WTC11 (cell line): ENCODE measurements at regions of chr18 and their contacts with region 1.

Region 1: GRCh38 chr18:24631243-24632025 is 171.0 kb downstream of the HRH4 start:
- DNase-seq: peak; percentile 31
- ATAC-seq: peak; percentile 96
- H3K4me3 Mint-ChIP-seq: peak overlapping the region; percentile 32
- H3K27ac Mint-ChIP-seq: no peak overlapping the region
- H3K4me1 Mint-ChIP-seq: peaks cover 16% of the 10 kb centered on the region
- H3K27me3 Mint-ChIP-seq: peaks cover 4% of the 10 kb centered on the region; the same call in 1 of the 2 replicates
- CTCF ChIP-seq: no peak

Region 2: DNA sequence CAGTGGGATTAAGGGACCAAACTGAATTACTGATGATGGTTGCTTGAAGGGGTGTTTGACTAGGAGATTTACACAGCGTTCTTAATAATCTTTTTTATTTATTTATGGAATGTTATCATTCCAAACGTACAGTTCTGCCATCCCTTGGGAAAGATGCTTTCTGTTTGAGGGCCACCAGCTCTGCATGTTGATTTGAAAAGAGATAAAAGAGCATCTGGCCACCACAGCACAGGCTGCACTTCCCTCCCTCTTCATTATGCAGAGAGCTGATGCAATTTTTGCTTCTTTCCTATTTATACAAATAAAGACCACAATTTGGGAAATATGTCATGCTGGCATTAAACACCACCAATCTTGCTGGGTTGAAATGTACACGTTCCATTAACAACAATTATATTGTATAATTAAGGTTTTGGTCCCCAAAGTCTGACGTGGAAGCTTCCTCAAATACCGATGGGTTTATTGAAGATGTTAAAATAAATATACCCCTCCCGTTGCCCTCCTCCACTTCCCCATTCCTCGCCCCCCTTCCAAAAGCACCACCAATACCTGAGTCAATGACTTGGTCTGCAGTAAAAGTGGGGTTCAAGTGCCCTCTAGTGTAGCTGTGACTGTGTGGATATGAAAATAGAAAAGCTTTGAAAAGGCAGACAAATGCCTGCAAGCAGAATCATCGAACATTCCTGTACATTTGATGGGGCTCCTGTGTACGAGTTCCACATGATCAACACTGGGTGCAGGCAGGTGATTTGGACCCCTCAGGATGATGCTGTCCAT is 40.9 kb after region 1 on chr18:
- CTCF ChIA-PET with region 1: interaction called, 11 read pairs
- POLR2A ChIA-PET with region 1: no interaction called
- DNase-seq: no peak
- ATAC-seq: no peak
- H3K4me3 Mint-ChIP-seq: no peak overlapping the region
- H3K27ac Mint-ChIP-seq: no peak overlapping the region
- H3K4me1 Mint-ChIP-seq: no peaks in the 10 kb centered on the region
- H3K27me3 Mint-ChIP-seq: no peaks in the 10 kb centered on the region
- CTCF ChIP-seq: no peak

Region 3: GRCh38 chr18:24726727-24727492 is 95.5 kb after region 1 on chr18:
- CTCF ChIA-PET with region 1: interaction called, 19 read pairs
- POLR2A ChIA-PET with region 1: no interaction called
- DNase-seq: peak; percentile 71
- ATAC-seq: peak; percentile 77
- H3K4me3 Mint-ChIP-seq: no peak overlapping the region
- H3K27ac Mint-ChIP-seq: no peak overlapping the region
- H3K4me1 Mint-ChIP-seq: peaks cover 8% of the 10 kb centered on the region
- H3K27me3 Mint-ChIP-seq: no peaks in the 10 kb centered on the region; the same call in 1 of the 2 replicates
- CTCF ChIP-seq: peak; percentile 77

Region 4: GRCh38 chr18:24766376-24766775 is 134.9 kb after region 1 on chr18:
- CTCF ChIA-PET with region 1: no interaction called
- POLR2A ChIA-PET with region 1: no interaction called
- DNase-seq: no peak
- ATAC-seq: no peak
- H3K4me3 Mint-ChIP-seq: no peak overlapping the region
- H3K27ac Mint-ChIP-seq: no peak overlapping the region
- H3K4me1 Mint-ChIP-seq: no peaks in the 10 kb centered on the region
- H3K27me3 Mint-ChIP-seq: no peaks in the 10 kb centered on the region
- CTCF ChIP-seq: no peak